Prostate gland (tissue), 2 donors: ENCODE measurements at regions of chr3 and their contacts with region 1.

Region 1: GRCh38 chr3:194871143-194871863 is 185.6 kb downstream of the FAM43A start:
- DNase-seq: peak; percentile 94
- H3K4me3 ChIP-seq: no peak overlapping the region
- H3K27ac ChIP-seq: peak overlapping the region; percentile 71 to 76
- H3K4me1 ChIP-seq: peaks cover 32% of the 10 kb centered on the region
- H3K27me3 ChIP-seq: no peaks in the 10 kb centered on the region
- CTCF ChIP-seq: no peak
- POLR2A ChIP-seq: no peak

Region 2: DNA sequence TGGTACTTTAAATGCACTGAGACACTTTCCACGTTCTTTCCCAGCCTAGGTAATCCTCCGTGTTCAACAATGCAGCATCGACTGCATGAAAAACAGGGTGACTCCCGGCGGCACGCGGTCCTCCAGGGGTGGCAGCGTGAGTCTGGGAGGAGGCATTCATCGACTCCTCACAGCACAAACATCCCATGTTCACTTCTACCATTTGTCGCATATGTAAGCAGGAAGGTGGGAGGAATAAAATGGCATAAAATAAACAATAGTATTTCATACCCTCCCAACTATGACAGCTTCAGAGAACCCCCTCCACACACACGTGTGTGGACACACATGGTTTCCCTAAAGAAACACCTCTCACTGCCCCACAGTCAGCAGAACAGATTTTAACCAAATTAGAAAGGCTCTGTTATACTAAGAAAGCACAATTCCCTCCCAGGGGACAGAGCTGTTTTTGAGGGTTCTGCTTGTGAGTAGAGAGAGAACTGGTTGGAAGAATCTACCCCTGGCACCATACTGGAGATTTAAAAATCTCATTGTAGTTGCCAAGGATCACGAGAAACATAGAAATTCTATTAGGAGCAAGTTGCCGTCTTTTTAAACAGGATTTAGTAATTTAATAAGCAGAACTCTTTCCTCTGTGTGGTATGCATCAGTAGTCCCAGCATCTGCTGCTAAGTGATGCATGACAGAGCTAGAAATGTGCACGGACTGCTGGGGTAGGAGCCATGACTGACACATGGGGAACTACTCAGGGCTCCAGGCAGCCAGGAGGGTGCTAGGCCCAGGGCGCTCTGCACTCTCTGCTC is 179.6 kb before region 1 on chr3:
- intact Hi-C with region 1: loop called (anchors 10 kb)
- DNase-seq: no peak
- H3K4me3 ChIP-seq: no peak overlapping the region
- H3K27ac ChIP-seq: no peak overlapping the region
- H3K4me1 ChIP-seq: no peaks in the 10 kb centered on the region
- H3K27me3 ChIP-seq: no peaks in the 10 kb centered on the region
- CTCF ChIP-seq: no peak
- POLR2A ChIP-seq: no peak

Region 3: GRCh38 chr3:195259475-195260279 is 388.4 kb after region 1 on chr3:
- intact Hi-C with region 1: loop called (anchors 5 kb)
- DNase-seq: peak; percentile 85
- H3K4me3 ChIP-seq: peak overlapping the region; percentile 53 to 60
- H3K27ac ChIP-seq: peak overlapping the region; percentile 93 to 94
- H3K4me1 ChIP-seq: peaks cover 11% of the 10 kb centered on the region
- H3K27me3 ChIP-seq: no peaks in the 10 kb centered on the region
- CTCF ChIP-seq: peak; percentile 62 to 100 (median 90)
- POLR2A ChIP-seq: peak; percentile 47